ENCODE measurements at regions of chr11 and their contacts with region 1.

Region 1: DNA sequence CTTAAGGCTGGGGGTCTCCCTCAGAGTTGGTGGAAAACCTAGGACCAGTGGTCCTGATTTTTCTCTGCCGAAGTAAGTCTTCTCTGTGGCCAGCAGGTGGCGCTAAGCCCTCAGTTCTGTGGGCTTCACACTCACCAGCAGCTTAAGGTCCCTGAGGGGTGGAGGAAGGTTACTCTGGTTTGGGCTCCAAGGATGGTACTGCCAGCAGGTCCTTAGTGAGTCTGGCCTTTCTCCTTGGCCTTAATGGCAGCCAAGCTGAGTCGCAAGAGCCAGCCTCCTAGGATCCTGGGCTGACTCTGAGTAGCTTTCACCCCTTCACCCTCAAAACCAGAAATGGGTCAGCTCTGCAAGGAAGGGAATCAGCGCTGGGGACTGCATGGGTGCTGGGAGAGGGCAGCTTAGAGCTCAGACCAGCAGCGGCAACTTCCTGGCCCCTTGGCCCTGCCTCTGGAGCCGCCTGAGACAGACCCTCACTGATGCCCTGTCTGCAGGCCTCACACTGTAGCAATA is 4.4 kb downstream of the KCNJ11 start:
- DNase-seq: no peak
- ATAC-seq: peak; percentile 85
- H3K4me3 ChIP-seq: no peak overlapping the region
- H3K27ac ChIP-seq: no peak overlapping the region
- H3K4me1 ChIP-seq: no peaks in the 10 kb centered on the region
- H3K27me3 ChIP-seq: peaks cover 2% of the 10 kb centered on the region in 2 experiments; a peak in 3 of 4 replicates
- CTCF ChIP-seq: peak; percentile 82 to 90 (median 86)
- EP300 ChIP-seq: no peak
- POLR2A ChIP-seq: no peak
- RAD21 ChIP-seq: peak; percentile 89

Region 2: GRCh38 chr11:17354601-17354991 is 29.5 kb before region 1 on chr11:
- CTCF ChIA-PET with region 1: interaction called, 14 read pairs
- POLR2A ChIA-PET with region 1: no interaction called
- RAD21 ChIA-PET with region 1: no interaction called
- SMC1A ChIA-PET with region 1: no interaction called
- in situ Hi-C with region 1: no loop called
- intact Hi-C with region 1: no loop called
- DNase-seq: peak; percentile 25
- ATAC-seq: peak; percentile 81
- H3K4me3 ChIP-seq: no peak overlapping the region
- H3K27ac ChIP-seq: no peak overlapping the region
- H3K4me1 ChIP-seq: peaks cover 12% of the 10 kb centered on the region
- H3K27me3 ChIP-seq: peaks cover 8 to 11% of the 10 kb centered on the region in 2 experiments; a peak in 3 of 4 replicates
- CTCF ChIP-seq: peak; percentile 49 to 65 (median 53)
- EP300 ChIP-seq: no peak
- POLR2A ChIP-seq: no peak
- RAD21 ChIP-seq: peak; percentile 28; the same call in 1 of the 2 replicates

Region 3: DNA sequence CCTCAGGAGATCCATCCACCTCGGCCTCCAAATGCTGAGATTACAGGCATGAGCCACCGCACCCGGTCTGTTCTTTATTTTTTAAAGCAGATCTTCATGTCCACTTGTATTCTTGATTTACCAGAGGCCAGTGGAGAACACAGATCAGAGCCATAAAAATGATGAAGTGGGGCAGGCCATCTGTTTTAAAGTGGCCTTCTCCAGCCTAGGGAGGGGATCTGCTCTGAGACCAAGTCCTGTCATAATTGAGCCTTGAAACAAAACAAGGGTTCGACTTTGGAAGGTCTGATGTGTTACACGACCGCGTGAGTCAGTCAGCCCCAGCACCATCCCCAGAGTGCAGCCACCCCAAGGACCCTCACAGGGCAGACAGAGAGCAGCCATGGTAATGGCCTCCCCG is 65.1 kb after region 1 on chr11:
- CTCF ChIA-PET with region 1: no interaction called
- POLR2A ChIA-PET with region 1: no interaction called
- RAD21 ChIA-PET with region 1: no interaction called
- SMC1A ChIA-PET with region 1: no interaction called
- in situ Hi-C with region 1: no loop called
- intact Hi-C with region 1: no loop called
- DNase-seq: no peak
- ATAC-seq: no peak
- H3K4me3 ChIP-seq: no peak overlapping the region
- H3K27ac ChIP-seq: no peak overlapping the region
- H3K4me1 ChIP-seq: no peaks in the 10 kb centered on the region
- H3K27me3 ChIP-seq: peaks cover 0 to 2% of the 10 kb centered on the region in 2 experiments; a peak in 2 of 4 replicates
- CTCF ChIP-seq: no peak
- EP300 ChIP-seq: no peak
- POLR2A ChIP-seq: no peak
- RAD21 ChIP-seq: no peak

Region 4: GRCh38 chr11:17471501-17471900 is 87.4 kb after region 1 on chr11:
- CTCF ChIA-PET with region 1: no interaction called
- POLR2A ChIA-PET with region 1: no interaction called
- RAD21 ChIA-PET with region 1: no interaction called
- SMC1A ChIA-PET with region 1: no interaction called
- in situ Hi-C with region 1: no loop called
- intact Hi-C with region 1: no loop called
- DNase-seq: no peak
- ATAC-seq: no peak
- H3K4me3 ChIP-seq: no peak overlapping the region
- H3K27ac ChIP-seq: no peak overlapping the region
- H3K4me1 ChIP-seq: no peaks in the 10 kb centered on the region
- H3K27me3 ChIP-seq: peaks cover 3 to 12% of the 10 kb centered on the region in 2 experiments; a peak in 3 of 4 replicates
- CTCF ChIP-seq: no peak
- EP300 ChIP-seq: no peak
- POLR2A ChIP-seq: no peak
- RAD21 ChIP-seq: no peak

Region 5: DNA sequence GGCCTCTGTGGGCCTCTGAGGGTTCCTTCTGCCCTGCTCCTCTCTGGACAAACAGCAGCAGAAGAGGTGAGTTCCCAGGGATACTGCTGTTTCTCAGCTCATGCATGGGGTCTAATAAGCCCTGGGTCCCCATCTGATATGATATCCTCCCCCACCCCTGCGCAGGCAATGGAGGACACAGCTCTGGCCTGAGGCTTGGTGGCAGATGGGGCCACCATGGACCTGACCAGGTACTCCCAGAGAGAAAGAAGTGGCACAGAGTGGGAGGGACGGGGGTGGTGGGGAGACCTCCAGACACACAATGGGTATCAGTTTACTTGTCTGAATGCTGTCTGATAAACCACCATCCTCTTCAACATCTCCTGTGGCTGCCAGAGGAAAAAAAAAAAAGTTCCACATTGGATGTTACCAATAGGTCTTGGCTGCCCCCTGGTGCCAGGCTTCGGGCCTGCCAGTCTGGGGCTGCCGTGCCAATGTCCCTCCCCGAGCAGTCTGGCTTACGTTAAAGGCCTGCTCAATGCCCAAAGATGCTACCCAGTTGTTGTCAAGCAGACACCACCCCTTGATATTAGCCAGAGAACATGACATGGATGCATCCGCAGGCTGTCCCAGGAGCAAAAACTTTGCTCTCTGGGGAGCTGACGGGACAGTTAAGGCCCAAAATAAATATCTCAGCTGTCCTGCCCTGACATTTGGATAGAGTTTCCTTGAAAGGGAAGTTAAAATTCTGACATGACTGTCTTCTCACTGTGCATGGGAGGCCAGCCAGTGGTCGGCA is 120.5 kb after region 1 on chr11:
- CTCF ChIA-PET with region 1: interaction called, 36 read pairs
- POLR2A ChIA-PET with region 1: no interaction called
- RAD21 ChIA-PET with region 1: interaction called, 19 read pairs
- SMC1A ChIA-PET with region 1: interaction called, 18 read pairs
- in situ Hi-C with region 1: loop called (anchors 10 kb)
- intact Hi-C with region 1: loop called (anchors 1 kb)
- DNase-seq: no peak
- ATAC-seq: peak; percentile 91
- H3K4me3 ChIP-seq: no peak overlapping the region
- H3K27ac ChIP-seq: no peak overlapping the region
- H3K4me1 ChIP-seq: no peaks in the 10 kb centered on the region; the same call in 1 of the 2 replicates
- H3K27me3 ChIP-seq: no peaks in the 10 kb centered on the region; a peak in 2 of 4 replicates
- CTCF ChIP-seq: peak; percentile 79 to 92 (median 85)
- EP300 ChIP-seq: no peak
- POLR2A ChIP-seq: no peak
- RAD21 ChIP-seq: peak; percentile 80

Region 6: GRCh38 chr11:17519061-17519885 is 135.2 kb after region 1 on chr11:
- CTCF ChIA-PET with region 1: interaction called, 14 read pairs
- POLR2A ChIA-PET with region 1: no interaction called
- RAD21 ChIA-PET with region 1: no interaction called
- SMC1A ChIA-PET with region 1: no interaction called
- in situ Hi-C with region 1: no loop called
- intact Hi-C with region 1: no loop called
- DNase-seq: no peak
- ATAC-seq: no peak
- H3K4me3 ChIP-seq: no peak overlapping the region
- H3K27ac ChIP-seq: no peak overlapping the region
- H3K4me1 ChIP-seq: no peaks in the 10 kb centered on the region
- H3K27me3 ChIP-seq: peaks cover 0 to 2% of the 10 kb centered on the region in 2 experiments; a peak in 2 of 4 replicates
- CTCF ChIP-seq: no peak
- EP300 ChIP-seq: no peak
- POLR2A ChIP-seq: no peak
- RAD21 ChIP-seq: no peak

Region 7: DNA sequence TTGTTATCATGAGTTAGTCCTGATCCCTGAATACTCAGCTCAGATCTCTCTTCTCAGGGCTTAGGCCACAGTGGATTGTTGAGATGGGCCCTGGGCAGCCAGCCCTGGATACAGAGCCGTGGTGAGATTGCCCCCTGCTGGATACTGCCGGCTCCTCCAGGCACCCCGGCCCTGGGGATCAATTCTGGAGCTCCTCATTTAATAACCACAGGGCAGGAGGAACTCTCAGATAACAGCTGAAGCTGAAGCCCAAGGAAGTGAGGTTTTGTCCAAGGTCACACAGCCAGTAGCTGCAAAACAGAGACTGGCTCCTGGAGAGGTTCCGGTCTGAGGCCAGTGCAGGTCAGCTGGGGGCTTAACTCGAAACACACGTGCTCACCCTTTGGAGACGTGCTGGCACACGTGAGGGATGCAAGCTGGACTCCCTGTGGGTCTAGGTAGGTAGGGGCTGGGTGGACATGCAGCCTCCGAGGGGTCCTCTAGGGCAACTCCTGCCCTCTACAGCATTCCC is 144.2 kb after region 1 on chr11:
- CTCF ChIA-PET with region 1: interaction called, 61 read pairs
- POLR2A ChIA-PET with region 1: no interaction called
- RAD21 ChIA-PET with region 1: interaction called, 20 read pairs
- SMC1A ChIA-PET with region 1: interaction called, 22 read pairs
- in situ Hi-C with region 1: no loop called
- intact Hi-C with region 1: loop called (anchors 2 kb)
- DNase-seq: no peak
- ATAC-seq: peak; percentile 98
- H3K4me3 ChIP-seq: no peak overlapping the region
- H3K27ac ChIP-seq: no peak overlapping the region
- H3K4me1 ChIP-seq: no peaks in the 10 kb centered on the region
- H3K27me3 ChIP-seq: peaks cover 0 to 3% of the 10 kb centered on the region in 2 experiments; a peak in 2 of 4 replicates
- CTCF ChIP-seq: peak; percentile 54 to 82 (median 77)
- EP300 ChIP-seq: no peak
- POLR2A ChIP-seq: no peak
- RAD21 ChIP-seq: peak; percentile 75

Measured in GM12878 (cell line).